ENCODE measurements at regions of chr2 and their contacts with region 1.

Region 1: DNA sequence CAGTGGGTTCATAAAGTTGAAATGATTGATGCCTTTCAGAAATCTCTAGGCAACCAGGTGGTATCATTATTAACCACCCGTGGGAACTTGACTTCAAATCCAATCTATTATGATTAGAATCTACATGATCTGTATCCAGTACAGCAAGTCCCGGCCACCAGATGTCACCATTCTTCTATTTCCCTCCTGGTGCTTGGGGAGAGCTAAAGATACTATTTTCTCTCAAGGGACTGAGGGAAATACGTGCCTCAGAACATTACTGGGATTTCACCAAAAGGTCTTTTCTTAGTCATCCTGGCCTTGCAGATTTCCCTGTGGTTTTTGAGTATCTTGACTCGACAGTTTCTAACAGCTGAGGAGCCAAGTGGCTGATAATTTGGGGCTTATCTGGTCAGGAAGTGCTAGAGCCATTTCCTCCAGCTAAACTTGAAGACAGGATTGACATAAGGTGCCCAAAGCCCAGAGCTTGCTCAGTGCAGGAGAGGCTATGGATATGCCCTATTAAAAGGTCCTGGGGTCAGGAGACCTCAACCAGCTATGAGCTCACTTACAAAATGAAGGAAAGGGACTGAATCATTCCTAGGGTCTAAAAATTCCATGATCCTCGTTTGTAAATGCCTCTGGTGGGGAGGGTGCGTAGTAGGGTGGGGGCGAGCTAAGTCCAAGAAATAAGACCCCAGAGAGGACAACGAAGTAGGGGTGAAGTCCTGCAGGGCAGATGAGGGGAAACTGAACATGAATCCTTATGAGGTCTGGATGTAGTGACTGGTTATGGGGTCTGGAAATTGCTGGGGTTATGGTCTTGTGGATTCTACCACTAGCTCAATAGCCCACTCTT is 135.4 kb upstream of the MGAT5 start:
- DNase-seq: peak; percentile 93
- ATAC-seq: peak; percentile 64
- H3K4me3 Mint-ChIP-seq: peak overlapping the region; percentile 80
- H3K27ac Mint-ChIP-seq: no peak overlapping the region
- H3K4me1 Mint-ChIP-seq: peaks cover 31% of the 10 kb centered on the region
- H3K27me3 Mint-ChIP-seq: peaks cover 2% of the 10 kb centered on the region

Region 2: GRCh38 chr2:134169788-134170187 is 51.3 kb after region 1 on chr2:
- CTCF ChIA-PET with region 1: interaction called, 6 read pairs
- POLR2A ChIA-PET with region 1: interaction called, 5 read pairs
- intact Hi-C with region 1: loop called (anchors 1 kb)
- DNase-seq: peak; percentile 51
- ATAC-seq: peak; percentile 91
- H3K4me3 Mint-ChIP-seq: no peak overlapping the region
- H3K27ac Mint-ChIP-seq: peak overlapping the region; percentile 13
- H3K4me1 Mint-ChIP-seq: peaks cover 85% of the 10 kb centered on the region
- H3K27me3 Mint-ChIP-seq: no peaks in the 10 kb centered on the region

Region 3: GRCh38 chr2:134218930-134219658 is 100.6 kb after region 1 on chr2:
- CTCF ChIA-PET with region 1: interaction called, 40 read pairs
- POLR2A ChIA-PET with region 1: interaction called, 5 read pairs
- intact Hi-C with region 1: loop called in 1 of 2 experiments (anchors 1 kb)
- DNase-seq: peak; percentile 61
- ATAC-seq: no peak
- H3K4me3 Mint-ChIP-seq: peak overlapping the region; percentile 22
- H3K27ac Mint-ChIP-seq: peak overlapping the region; percentile 79
- H3K4me1 Mint-ChIP-seq: peaks cover 68% of the 10 kb centered on the region
- H3K27me3 Mint-ChIP-seq: no peaks in the 10 kb centered on the region

Region 4: GRCh38 chr2:134253804-134254203 is 135.3 kb after region 1 on chr2 and contains the start of gene MGAT5:
- CTCF ChIA-PET with region 1: interaction called, 15 read pairs
- POLR2A ChIA-PET with region 1: interaction called, 5 read pairs
- intact Hi-C with region 1: loop called in 1 of 2 experiments (anchors 1 kb)
- DNase-seq: no peak
- ATAC-seq: no peak
- H3K4me3 Mint-ChIP-seq: no peak within 1 kb of the TSS
- H3K27ac Mint-ChIP-seq: no peak within 1 kb of the TSS
- H3K4me1 Mint-ChIP-seq: peaks cover 90% of the 10 kb centered on the region
- H3K27me3 Mint-ChIP-seq: peaks cover 4% of the 10 kb centered on the region
- total RNA-seq, gene MGAT5: 22.2 to 25.7 TPM

Region 5: DNA sequence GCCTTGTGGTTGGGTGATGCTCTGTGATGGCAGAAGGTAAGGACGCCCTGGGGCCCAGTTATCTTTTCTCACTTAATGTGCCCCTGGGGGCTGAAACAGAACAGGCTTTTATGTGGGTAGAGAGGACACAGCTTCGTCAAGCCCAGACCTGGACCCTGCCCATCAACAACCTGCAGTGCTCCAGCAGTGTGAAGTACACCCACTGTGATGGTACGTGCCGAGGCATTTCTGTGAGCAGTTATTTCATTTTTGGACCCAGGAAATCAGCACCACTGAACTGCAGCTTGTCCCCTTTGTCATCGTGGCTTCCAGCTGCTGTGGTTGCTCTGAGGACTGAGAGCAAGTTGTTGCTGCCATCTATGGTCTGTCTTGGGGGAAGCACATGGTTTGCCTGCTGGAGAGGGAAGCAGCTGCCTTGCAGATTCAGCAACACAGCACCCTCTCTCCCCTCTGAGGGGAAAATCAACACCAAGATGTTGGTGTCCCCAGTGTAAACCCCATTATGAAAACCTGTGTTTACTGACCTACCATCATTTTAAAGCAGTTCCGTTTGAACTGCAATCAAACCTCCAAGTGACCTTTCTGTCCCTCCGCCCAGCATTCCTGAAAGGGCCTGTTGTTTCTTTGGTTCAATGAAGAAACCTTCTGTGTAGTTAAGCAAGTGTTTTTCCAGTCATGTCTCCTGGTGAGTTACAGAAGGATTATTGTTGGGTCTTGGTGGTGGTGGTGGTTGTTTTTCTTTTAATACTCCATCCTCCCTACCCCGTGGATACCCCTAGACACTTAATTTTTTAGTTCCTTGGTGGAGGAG is 293.5 kb after region 1 on chr2:
- CTCF ChIA-PET with region 1: interaction called, 125 read pairs
- POLR2A ChIA-PET with region 1: interaction called, 3 read pairs
- intact Hi-C with region 1: loop called (anchors 1 kb)
- DNase-seq: peak; percentile 82
- ATAC-seq: peak; percentile 98
- H3K4me3 Mint-ChIP-seq: no peak overlapping the region
- H3K27ac Mint-ChIP-seq: no peak overlapping the region
- H3K4me1 Mint-ChIP-seq: peaks cover 41% of the 10 kb centered on the region
- H3K27me3 Mint-ChIP-seq: no peaks in the 10 kb centered on the region

Region 6: DNA sequence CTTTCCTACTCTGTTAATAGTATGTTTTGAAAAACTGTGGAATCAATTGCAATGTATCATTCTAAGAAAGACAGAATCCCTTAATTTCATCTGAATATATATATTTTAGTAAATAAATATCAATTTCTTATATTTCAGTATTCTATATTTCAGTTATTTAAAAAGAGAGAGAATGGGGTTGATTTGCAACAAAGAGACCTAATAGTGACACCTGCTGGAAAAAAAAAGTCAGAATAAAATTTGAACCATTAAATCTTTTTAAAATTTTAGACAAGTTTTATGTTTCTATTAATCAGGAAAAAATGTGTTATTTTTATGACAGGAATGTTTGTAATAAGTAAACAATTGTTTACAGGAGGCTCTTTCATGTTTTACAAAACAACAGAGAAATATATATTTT is 779.4 kb after region 1 on chr2:
- CTCF ChIA-PET with region 1: no interaction called
- POLR2A ChIA-PET with region 1: no interaction called
- intact Hi-C with region 1: loop called (anchors 5 to 10 kb)
- DNase-seq: no peak
- ATAC-seq: no peak
- H3K4me3 Mint-ChIP-seq: no peak overlapping the region
- H3K27ac Mint-ChIP-seq: no peak overlapping the region
- H3K4me1 Mint-ChIP-seq: no peaks in the 10 kb centered on the region
- H3K27me3 Mint-ChIP-seq: no peaks in the 10 kb centered on the region

Measured in activated CD4-positive, alpha-beta T cell treated with anti-CD3 and anti-CD28 coated beads for 36 hours (primary cell).